Activated CD4-positive, alpha-beta memory T cell treated with anti-CD3 and anti-CD28 coated beads, Interleukin-2, amount 10 ng/mL, durations not matched to agents 7 days and 5 days (primary cell): ENCODE measurements at regions of chr17 and their contacts with region 1.

Region 1: DNA sequence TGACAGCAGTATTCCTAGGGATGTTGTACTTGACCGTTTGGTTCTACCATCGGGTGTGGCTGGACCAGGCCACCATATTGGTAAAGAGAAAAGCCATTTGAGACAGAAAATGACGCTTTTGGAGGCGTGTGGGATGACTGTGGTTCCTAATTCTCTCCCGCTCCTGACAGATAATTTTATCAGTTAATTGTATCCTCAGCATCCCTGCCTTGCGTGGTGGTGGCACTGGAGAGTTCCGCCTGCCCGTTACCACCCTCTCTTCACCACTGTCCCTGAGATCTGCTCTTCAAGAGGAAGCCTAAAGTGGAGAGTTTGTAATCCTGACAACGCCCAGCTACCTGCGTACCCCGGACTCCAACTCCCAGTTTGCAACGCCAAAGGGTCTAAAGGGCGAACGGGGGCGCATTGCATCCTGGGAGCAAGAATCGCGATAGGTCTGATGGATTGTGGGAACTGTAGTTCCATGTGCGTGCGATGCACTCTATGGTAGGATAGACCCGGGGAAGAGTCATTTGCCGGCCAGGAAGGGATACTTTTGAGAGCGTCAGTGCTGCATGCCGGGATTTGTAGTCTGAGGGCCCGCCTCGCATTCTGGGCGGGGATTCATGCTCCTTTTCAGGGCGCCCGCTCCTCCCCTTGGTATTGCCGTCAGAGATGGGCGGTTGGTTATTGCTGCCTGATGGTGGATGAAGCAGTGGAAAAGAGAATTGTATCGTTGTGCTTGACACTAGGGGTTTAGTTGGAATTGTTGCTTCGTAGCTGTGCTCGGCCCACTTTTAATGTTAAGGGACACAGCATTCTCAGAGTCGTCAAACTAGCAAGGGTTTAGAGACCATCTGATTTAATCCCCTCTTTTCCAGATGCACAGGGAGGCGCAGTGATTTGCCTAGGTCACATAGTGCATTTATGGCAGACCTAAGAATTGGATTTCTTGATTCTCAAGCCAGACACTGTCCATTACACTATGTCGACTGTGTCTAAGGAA is 965 bp upstream of the PHF12 start:
- DNase-seq: peak; percentile 97
- H3K4me3 Mint-ChIP-seq: no peak overlapping the region
- H3K27ac Mint-ChIP-seq: no peak overlapping the region
- H3K4me1 Mint-ChIP-seq: peaks cover 14% of the 10 kb centered on the region
- H3K27me3 Mint-ChIP-seq: no peaks in the 10 kb centered on the region

Region 2: GRCh38 chr17:28726226-28727130 is 225.8 kb before region 1 on chr17 and contains the start of gene TLCD1:
- CTCF ChIA-PET with region 1: interaction called, 93 read pairs
- POLR2A ChIA-PET with region 1: interaction called, 90 read pairs
- DNase-seq: peak; percentile 93
- H3K4me3 Mint-ChIP-seq: peak within 1 kb of the TSS; percentile 95
- H3K27ac Mint-ChIP-seq: peak within 1 kb of the TSS; percentile 98
- H3K4me1 Mint-ChIP-seq: peaks cover 62% of the 10 kb centered on the region
- H3K27me3 Mint-ChIP-seq: no peaks in the 10 kb centered on the region
- total RNA-seq, gene TLCD1: 1.4 to 2.3 TPM

Region 3: GRCh38 chr17:28889996-28890395 is 62.3 kb before region 1 on chr17:
- CTCF ChIA-PET with region 1: no interaction called
- POLR2A ChIA-PET with region 1: interaction called, 14 read pairs
- DNase-seq: no peak
- H3K4me3 Mint-ChIP-seq: no peak overlapping the region
- H3K27ac Mint-ChIP-seq: peak overlapping the region; percentile 47
- H3K4me1 Mint-ChIP-seq: peaks cover 54% of the 10 kb centered on the region
- H3K27me3 Mint-ChIP-seq: no peaks in the 10 kb centered on the region

Region 4: GRCh38 chr17:28916302-28916934 is 35.9 kb before region 1 on chr17:
- CTCF ChIA-PET with region 1: interaction called, 6 read pairs
- POLR2A ChIA-PET with region 1: interaction called, 10 read pairs
- DNase-seq: peak; percentile 46
- H3K4me3 Mint-ChIP-seq: no peak overlapping the region
- H3K27ac Mint-ChIP-seq: no peak overlapping the region
- H3K4me1 Mint-ChIP-seq: peaks cover 8% of the 10 kb centered on the region
- H3K27me3 Mint-ChIP-seq: no peaks in the 10 kb centered on the region

Region 5: GRCh38 chr17:28967221-28968140 is 15.2 kb after region 1 on chr17:
- CTCF ChIA-PET with region 1: interaction called, 34 read pairs
- POLR2A ChIA-PET with region 1: interaction called, 6 read pairs
- DNase-seq: no peak
- H3K4me3 Mint-ChIP-seq: no peak overlapping the region
- H3K27ac Mint-ChIP-seq: no peak overlapping the region
- H3K4me1 Mint-ChIP-seq: no peaks in the 10 kb centered on the region
- H3K27me3 Mint-ChIP-seq: peaks cover 22% of the 10 kb centered on the region

Region 6: GRCh38 chr17:29140051-29140621 is 187.9 kb after region 1 on chr17:
- CTCF ChIA-PET with region 1: interaction called, 7 read pairs
- POLR2A ChIA-PET with region 1: interaction called, 13 read pairs
- DNase-seq: peak; percentile 92
- H3K4me3 Mint-ChIP-seq: peak overlapping the region; percentile 98
- H3K27ac Mint-ChIP-seq: peak overlapping the region; percentile 100
- H3K4me1 Mint-ChIP-seq: peaks cover 79% of the 10 kb centered on the region
- H3K27me3 Mint-ChIP-seq: no peaks in the 10 kb centered on the region